Activated naive CD4-positive, alpha-beta T cell treated with anti-CD3 and anti-CD28 coated beads for 36 hours (primary cell): ENCODE measurements at regions of chr15 and their contacts with region 1.

Region 1: DNA sequence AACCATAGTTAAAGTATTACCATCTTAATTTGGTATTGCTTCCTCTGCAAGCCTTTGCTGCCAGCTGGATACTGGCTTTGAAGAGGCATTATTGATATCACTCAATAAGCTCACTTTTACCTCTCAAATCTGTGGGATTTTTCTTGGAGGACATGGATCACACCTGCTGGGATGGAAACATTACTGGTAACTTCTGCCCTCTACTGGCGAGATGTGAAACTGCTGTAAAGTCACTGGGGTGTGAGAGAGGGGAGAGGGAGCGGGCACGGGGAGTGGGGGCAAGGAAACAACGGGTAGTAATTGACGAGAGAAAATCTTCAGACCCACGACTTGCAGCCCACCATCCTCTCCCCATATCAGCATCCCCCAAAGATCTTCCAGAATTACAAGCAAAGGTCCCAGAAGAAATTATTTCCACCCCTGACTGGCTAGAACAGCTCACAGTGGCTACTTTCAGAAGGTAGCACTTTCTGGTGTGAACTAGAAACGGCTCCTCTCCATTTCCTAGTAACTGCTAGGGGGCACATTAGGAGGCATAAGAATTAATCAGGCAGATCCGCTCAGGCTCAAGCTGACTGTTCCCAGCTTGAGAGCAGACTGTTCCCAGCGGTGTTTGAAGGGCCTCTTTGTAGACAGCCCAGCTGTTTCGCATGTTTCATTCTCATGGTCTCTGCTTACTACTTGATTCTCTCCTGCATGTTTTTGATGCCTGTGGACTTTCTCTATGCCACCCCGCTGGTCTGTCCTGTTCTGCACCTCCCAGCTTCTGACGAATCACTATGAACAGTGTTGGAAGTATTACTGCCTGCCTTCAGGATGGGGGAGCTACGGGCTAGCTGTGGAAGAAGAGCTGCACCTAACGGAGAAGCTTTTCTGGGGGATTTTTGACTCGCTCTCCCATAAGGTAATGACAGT is 230.4 kb upstream of the CHRM5 start:
- DNase-seq: peak; percentile 56
- H3K4me3 Mint-ChIP-seq: no peak overlapping the region
- H3K27ac Mint-ChIP-seq: no peak overlapping the region
- H3K4me1 Mint-ChIP-seq: no peaks in the 10 kb centered on the region
- H3K27me3 Mint-ChIP-seq: peaks cover 5% of the 10 kb centered on the region

Region 2: GRCh38 chr15:33292717-33293307 is 445.1 kb before region 1 on chr15:
- CTCF ChIA-PET with region 1: interaction called, 4 read pairs
- intact Hi-C with region 1: loop called (anchors 1 kb)
- DNase-seq: peak; percentile 75
- H3K4me3 Mint-ChIP-seq: no peak overlapping the region
- H3K27ac Mint-ChIP-seq: no peak overlapping the region
- H3K4me1 Mint-ChIP-seq: no peaks in the 10 kb centered on the region
- H3K27me3 Mint-ChIP-seq: no peaks in the 10 kb centered on the region

Region 3: DNA sequence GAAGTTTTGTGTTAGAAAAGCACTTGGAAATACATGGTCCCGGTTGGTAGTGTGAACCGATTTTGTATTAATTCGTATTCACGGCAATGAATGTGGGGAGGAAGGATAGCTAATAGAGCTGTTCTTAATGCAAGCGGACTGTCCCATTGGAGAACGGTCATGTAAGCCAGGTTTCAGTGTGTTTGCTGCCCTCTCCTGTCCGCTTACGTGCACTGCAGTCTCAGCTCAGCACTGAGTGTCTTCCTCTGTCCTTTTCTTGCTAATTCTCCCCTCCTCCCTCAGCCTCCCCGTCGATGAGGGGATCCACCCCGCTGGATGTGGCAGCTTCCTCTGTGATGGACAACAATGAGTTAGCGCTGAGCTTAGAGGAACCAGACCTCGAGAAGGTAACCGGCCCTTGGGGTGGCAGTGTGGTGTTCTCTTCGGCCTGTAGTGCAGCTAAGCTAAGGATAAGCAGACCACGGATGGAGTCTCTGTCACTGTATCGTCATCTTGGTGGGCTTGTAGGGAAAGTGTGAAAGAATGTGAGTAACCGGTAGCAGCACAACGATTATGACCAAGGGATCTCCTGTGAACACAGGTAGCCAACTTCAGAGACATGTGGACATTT is 37.1 kb before region 1 on chr15:
- CTCF ChIA-PET with region 1: interaction called, 13 read pairs
- intact Hi-C with region 1: no loop called
- DNase-seq: peak; percentile 76
- H3K4me3 Mint-ChIP-seq: no peak overlapping the region
- H3K27ac Mint-ChIP-seq: no peak overlapping the region
- H3K4me1 Mint-ChIP-seq: no peaks in the 10 kb centered on the region
- H3K27me3 Mint-ChIP-seq: peaks cover 10% of the 10 kb centered on the region

Region 4: DNA sequence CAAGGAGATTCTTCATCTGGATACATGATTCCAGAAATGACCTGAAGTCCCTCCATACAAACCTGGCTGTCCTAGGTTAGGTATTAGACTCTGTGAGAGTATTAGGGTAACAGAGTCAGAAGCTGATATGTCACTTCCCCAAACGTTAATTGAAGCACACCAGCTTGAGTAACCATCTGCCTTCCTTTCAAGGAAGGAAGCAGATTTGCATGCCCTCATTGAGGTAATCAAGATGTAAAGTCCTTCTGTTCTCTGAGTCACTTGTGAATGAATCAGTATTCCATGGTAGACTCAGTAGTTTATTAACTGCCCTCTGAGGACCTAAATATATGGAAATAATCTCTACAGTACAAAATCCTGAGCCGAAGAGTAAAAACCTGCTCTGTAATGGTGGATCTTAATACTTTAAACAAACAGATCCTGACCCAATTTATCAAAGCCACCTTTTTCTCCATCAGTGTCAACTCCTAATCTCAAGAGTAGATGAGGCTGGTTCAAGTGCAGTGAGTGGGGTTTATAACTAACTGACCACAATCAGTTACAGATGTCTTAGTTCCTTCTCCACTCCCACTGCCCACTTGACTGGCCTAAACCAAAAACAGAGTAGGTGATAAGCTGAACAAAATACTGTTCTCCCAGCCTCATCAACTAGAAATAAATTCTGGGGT is 15.8 kb before region 1 on chr15:
- CTCF ChIA-PET with region 1: interaction called, 12 read pairs
- intact Hi-C with region 1: no loop called
- DNase-seq: no peak
- H3K4me3 Mint-ChIP-seq: no peak overlapping the region
- H3K27ac Mint-ChIP-seq: no peak overlapping the region
- H3K4me1 Mint-ChIP-seq: no peaks in the 10 kb centered on the region
- H3K27me3 Mint-ChIP-seq: no peaks in the 10 kb centered on the region

Region 5: GRCh38 chr15:33963831-33964664 is 226.1 kb after region 1 on chr15:
- CTCF ChIA-PET with region 1: interaction called, 11 read pairs
- intact Hi-C with region 1: loop called (anchors 2 kb)
- DNase-seq: no peak
- H3K4me3 Mint-ChIP-seq: no peak overlapping the region
- H3K27ac Mint-ChIP-seq: no peak overlapping the region
- H3K4me1 Mint-ChIP-seq: no peaks in the 10 kb centered on the region
- H3K27me3 Mint-ChIP-seq: no peaks in the 10 kb centered on the region

Region 6: GRCh38 chr15:34038023-34038870 is 300.3 kb after region 1 on chr15:
- CTCF ChIA-PET with region 1: no interaction called
- intact Hi-C with region 1: loop called (anchors 5 kb)
- DNase-seq: peak; percentile 70
- H3K4me3 Mint-ChIP-seq: peak overlapping the region; percentile 92
- H3K27ac Mint-ChIP-seq: peak overlapping the region; percentile 92
- H3K4me1 Mint-ChIP-seq: peaks cover 17% of the 10 kb centered on the region
- H3K27me3 Mint-ChIP-seq: no peaks in the 10 kb centered on the region